Right lobe of liver (tissue), 6 donors: ENCODE measurements at regions of chr10 and their contacts with region 1.

Region 1: GRCh38 chr10:14822879-14823755 is 14.7 kb downstream of the CDNF start:
- DNase-seq: no peak
- ATAC-seq: peak; percentile 58 to 76 (median 68)
- H3K4me3 ChIP-seq: no peak overlapping the region
- H3K27ac ChIP-seq: no peak overlapping the region
- H3K4me1 ChIP-seq: no peaks in the 10 kb centered on the region
- H3K27me3 ChIP-seq: no peaks in the 10 kb centered on the region
- CTCF ChIP-seq: peak; percentile 59 to 73 (median 66)
- POLR2A ChIP-seq: no peak

Region 2: DNA sequence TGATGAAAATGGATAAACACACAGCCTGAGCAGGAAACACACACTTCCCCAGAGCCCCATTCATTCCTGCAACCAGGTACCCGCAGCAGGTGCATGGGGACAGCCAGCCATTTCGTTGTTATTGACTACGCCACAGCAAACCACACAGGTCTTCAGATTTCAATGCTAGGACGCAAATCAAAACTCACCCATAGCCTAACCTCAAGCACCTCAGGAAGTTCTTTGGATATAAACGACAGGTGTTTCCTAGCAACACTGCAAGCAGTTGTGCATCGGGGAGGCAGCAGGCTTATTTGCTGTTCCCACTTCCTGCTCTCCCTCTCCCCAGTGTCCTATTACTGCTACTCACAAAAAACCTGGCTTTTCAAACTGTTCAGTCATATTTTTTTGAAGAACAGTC is 315.9 kb before region 1 on chr10:
- intact Hi-C with region 1: loop called in 1 of 2 experiments (anchors 10 kb)
- DNase-seq: no peak
- ATAC-seq: no peak
- H3K4me3 ChIP-seq: no peak overlapping the region
- H3K27ac ChIP-seq: no peak overlapping the region
- H3K4me1 ChIP-seq: no peaks in the 10 kb centered on the region
- H3K27me3 ChIP-seq: no peaks in the 10 kb centered on the region
- CTCF ChIP-seq: no peak
- POLR2A ChIP-seq: no peak